CD4-positive, alpha-beta memory T cell (primary cell): ENCODE measurements at regions of chr17 and their contacts with region 1.

Region 1: GRCh38 chr17:47895856-47896671 is at the start of gene SP2:
- DNase-seq: peak; percentile 100
- H3K4me3 ChIP-seq: peak within 1 kb of the TSS; percentile 92 to 96
- H3K4me3 Mint-ChIP-seq: peak within 1 kb of the TSS; percentile 94 to 100 (median 99)
- H3K27ac ChIP-seq: peak within 1 kb of the TSS; percentile 97
- H3K27ac Mint-ChIP-seq: peak within 1 kb of the TSS; percentile 96 to 100 (median 100)
- H3K4me1 ChIP-seq: peaks cover 42% of the 10 kb centered on the region
- H3K4me1 Mint-ChIP-seq: peaks cover 27 to 58% (median 39%) of the 10 kb centered on the region in 4 donors
- H3K27me3 ChIP-seq: no peaks in the 10 kb centered on the region
- H3K27me3 Mint-ChIP-seq: no peaks in the 10 kb centered on the region
- total RNA-seq, gene SP2: 39.6 to 39.9 TPM

Region 2: DNA sequence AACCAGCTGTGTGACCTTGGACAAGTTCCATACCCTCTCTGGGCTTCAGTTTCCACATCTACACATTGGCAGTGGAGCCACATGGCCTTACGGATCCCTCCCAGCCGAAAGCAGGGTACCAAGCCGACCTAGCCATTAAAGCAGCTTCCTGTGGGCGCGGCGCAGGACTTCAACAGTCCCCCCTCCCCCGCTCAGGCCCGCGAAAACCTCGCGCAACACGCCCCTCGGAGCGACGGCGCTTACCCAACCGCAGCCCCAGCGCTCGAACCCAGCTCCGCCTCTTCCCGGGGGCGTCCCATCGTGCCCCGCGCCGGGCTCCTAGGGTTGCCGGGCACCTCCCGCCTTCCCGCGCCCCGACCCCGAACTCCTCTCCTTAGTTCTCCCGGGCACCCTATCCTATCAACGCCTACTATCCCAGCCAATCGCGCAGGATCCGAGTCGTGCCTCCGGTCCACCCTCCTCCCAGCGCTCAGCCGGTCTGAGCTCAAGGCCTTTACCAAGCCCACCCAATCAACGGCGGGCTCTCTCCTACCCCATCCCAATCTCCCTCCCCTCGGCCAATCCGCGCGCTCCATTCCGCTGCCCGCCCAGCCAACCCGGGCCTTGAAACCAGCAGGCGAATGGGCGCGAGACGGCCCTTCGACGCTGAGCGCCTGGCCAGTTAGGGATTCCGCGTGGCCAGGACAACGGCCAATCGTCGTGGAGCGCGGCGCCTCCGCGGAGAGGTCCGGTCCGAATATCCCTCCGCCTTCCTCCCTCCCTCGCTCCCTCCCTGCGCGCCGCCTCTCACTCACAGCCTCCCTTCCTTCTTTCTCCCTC is 246.7 kb before region 1 on chr17 and contains the start of gene KPNB1:
- CTCF ChIA-PET with region 1: no interaction called
- POLR2A ChIA-PET with region 1: interaction called, 23 read pairs
- intact Hi-C with region 1: loop called (anchors 1 kb)
- DNase-seq: peak; percentile 98 to 99 (median 98)
- H3K4me3 ChIP-seq: peak within 1 kb of the TSS; percentile 73 to 79
- H3K4me3 Mint-ChIP-seq: peak within 1 kb of the TSS; percentile 97 to 100 (median 100)
- H3K27ac ChIP-seq: peak within 1 kb of the TSS; percentile 82
- H3K27ac Mint-ChIP-seq: peak within 1 kb of the TSS; percentile 91 to 100 (median 99)
- H3K4me1 ChIP-seq: peaks cover 53% of the 10 kb centered on the region
- H3K4me1 Mint-ChIP-seq: peaks cover 37 to 68% (median 41%) of the 10 kb centered on the region in 4 donors
- H3K27me3 ChIP-seq: no peaks in the 10 kb centered on the region
- H3K27me3 Mint-ChIP-seq: no peaks in the 10 kb centered on the region
- total RNA-seq, gene KPNB1: 258 to 268 TPM

Region 3: DNA sequence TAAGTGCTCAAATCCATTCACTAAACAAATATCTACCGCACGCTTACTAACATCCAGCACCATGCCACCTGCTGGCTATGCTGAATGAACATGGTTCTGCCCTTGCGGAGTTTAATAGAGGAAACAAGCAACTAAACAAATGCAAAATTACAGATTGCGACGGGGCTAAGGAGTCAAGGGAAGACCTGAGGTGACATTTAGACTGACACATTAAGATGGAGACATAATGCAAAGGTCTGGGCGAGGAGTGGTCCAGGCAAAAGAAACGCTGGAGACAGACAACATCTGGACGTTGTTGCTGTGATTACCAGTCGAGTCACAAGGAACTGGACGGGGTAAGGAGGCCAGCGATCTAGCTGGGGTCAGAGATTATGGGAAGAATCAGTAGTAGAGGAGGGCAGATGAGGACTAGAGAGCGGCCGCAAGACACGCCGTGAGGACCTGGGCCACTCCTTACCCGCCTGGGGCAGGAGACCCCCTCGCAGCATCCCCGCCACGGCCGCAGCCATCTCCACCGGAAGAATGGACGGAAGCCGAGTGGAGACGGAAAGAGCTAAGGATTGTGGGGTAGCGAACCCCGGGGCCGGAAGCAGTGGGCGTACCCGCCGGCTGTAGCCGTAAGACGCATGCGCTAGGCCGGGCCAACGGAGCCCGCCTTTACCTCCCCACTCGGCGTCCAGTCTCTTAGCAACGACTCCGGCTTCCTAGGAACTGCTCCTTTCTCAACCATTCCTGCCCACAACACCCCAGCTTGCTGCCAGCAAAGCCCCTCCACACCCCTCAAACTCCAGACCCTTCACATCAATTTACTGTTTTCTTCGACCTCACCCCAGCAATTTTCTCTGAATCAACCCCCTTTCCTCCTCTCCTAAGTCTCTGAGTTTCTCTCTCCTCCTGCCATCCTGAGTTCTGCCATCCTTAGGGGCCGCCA is 64.8 kb before region 1 on chr17 and contains the starts of genes LRRC46 and MRPL10:
- CTCF ChIA-PET with region 1: interaction called, 562 read pairs
- POLR2A ChIA-PET with region 1: interaction called, 271 read pairs
- intact Hi-C with region 1: loop called (anchors 1 kb)
- DNase-seq: peak; percentile 90 to 91 (median 91)
- H3K4me3 ChIP-seq: peak within 1 kb of the TSS; percentile 87 to 100
- H3K4me3 Mint-ChIP-seq: peak within 1 kb of the TSS; percentile 86 to 98 (median 95)
- H3K27ac ChIP-seq: peak within 1 kb of the TSS; percentile 82
- H3K27ac Mint-ChIP-seq: peak within 1 kb of the TSS; percentile 86 to 100 (median 98)
- H3K4me1 ChIP-seq: peaks cover 56% of the 10 kb centered on the region
- H3K4me1 Mint-ChIP-seq: peaks cover 37 to 73% (median 49%) of the 10 kb centered on the region in 4 donors
- H3K27me3 ChIP-seq: no peaks in the 10 kb centered on the region
- H3K27me3 Mint-ChIP-seq: no peaks in the 10 kb centered on the region
- total RNA-seq, gene LRRC46: 0.23 to 0.69 TPM
- total RNA-seq, gene MRPL10: 39.6 to 41.4 TPM

Region 4: GRCh38 chr17:47882247-47882646 is 13.8 kb before region 1 on chr17:
- CTCF ChIA-PET with region 1: interaction called, 3 read pairs
- POLR2A ChIA-PET with region 1: interaction called, 34 read pairs
- intact Hi-C with region 1: no loop called
- DNase-seq: no peak
- H3K4me3 ChIP-seq: no peak overlapping the region
- H3K4me3 Mint-ChIP-seq: no peak overlapping the region
- H3K27ac ChIP-seq: no peak overlapping the region
- H3K27ac Mint-ChIP-seq: no peak overlapping the region
- H3K4me1 ChIP-seq: peaks cover 41% of the 10 kb centered on the region
- H3K4me1 Mint-ChIP-seq: peaks cover 23 to 36% (median 30%) of the 10 kb centered on the region in 4 donors
- H3K27me3 ChIP-seq: no peaks in the 10 kb centered on the region
- H3K27me3 Mint-ChIP-seq: peaks cover 3 to 11% of the 10 kb centered on the region in 2 donors

Region 5: DNA sequence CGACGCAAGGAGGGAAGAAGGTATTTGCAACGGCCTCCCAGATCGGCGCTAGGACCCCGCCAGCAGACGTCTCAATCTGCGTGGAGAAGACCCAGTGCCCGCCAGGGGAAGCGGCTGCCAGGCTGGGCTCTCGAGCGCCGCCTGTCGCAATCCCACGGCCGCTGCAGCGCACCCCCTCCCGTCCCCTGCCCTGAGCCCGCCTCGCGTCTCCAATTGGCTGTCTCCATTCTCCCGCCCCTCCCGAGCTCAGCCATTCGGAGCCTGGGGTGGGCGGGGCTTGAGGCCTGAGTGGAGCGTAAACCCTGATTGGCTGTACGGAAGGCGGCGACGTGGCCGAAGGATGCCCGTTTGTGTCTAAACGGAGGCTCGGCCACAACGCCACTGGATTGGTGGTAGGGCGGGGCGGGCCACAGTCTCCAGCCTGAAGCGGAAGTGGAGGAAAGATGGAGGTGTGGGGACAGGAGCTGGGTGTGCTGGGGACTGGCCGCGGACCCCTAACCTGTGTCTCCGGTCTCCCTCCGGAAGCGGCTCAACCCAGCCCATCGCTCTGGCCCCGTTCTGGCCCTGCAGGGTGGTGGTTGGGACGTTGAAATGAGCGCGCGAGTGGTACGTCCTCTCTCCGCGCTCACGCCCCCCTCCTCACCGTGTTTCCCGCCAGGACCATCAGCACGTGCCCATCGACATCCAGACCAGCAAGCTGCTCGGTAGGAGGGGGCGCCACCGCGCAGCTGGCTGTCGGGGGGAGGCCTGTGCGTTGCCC is 74.8 kb after region 1 on chr17 and contains the start of gene CDK5RAP3:
- CTCF ChIA-PET with region 1: interaction called, 6 read pairs
- POLR2A ChIA-PET with region 1: interaction called, 45 read pairs
- intact Hi-C with region 1: loop called (anchors 1 kb)
- DNase-seq: peak; percentile 96 to 98 (median 97)
- H3K4me3 ChIP-seq: peak within 1 kb of the TSS; percentile 89 to 95
- H3K4me3 Mint-ChIP-seq: peak within 1 kb of the TSS; percentile 97 to 100 (median 98)
- H3K27ac ChIP-seq: peak within 1 kb of the TSS; percentile 62
- H3K27ac Mint-ChIP-seq: peak within 1 kb of the TSS; percentile 83 to 97 (median 96)
- H3K4me1 ChIP-seq: peaks cover 28% of the 10 kb centered on the region
- H3K4me1 Mint-ChIP-seq: peaks cover 17 to 42% (median 25%) of the 10 kb centered on the region in 4 donors
- H3K27me3 ChIP-seq: no peaks in the 10 kb centered on the region
- H3K27me3 Mint-ChIP-seq: peaks cover 0 to 1% of the 10 kb centered on the region in 2 donors
- total RNA-seq, gene CDK5RAP3: 340 to 343 TPM

Region 6: DNA sequence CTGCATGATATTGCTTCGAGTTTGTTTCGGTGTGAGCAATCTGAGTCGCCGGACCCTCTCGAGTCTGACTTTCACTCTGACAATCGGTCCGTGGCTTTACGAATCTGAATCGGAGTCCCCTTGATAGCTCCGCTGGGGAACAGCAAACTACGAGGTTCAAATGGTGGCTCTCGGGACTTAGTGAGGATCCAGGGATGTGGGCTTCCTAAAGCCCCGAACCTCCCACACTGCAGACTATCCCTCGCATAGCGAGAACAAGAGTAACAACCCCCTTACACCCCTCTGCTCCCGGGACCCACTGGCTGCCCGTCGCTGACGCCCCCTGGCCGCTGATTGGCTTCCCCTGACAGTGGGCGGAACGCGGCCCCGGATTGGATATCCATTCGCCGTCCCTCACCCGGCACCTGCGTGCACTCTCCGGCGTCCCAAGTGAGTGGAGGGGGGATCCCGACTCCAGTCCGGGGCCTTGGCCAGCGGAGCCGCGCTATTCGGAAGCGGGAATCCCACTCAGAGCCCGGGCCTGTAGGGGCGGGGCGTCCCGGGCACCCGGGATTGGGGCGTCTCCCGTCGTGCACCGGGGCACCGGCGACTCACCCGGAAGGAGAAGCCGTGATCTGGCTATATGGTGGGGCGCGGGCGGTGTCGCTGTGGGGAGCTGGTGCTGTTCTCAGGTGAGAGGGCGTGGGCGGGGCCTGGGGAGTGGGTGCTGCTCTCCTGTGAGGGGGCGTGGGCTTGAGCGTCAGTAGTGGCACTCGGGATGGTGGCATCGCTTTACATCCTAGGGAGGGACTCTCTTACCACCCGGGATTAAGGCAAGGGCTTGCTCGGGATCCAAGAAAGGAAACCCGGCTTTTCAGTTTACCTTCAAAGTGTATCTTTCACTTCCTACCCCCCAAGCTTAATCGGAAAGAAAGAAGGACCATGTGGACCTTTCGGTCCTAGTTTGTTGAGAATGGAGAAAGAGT is 211.4 kb after region 1 on chr17 and contains the start of gene SNX11:
- CTCF ChIA-PET with region 1: no interaction called
- POLR2A ChIA-PET with region 1: interaction called, 3 read pairs
- intact Hi-C with region 1: loop called (anchors 1 kb)
- DNase-seq: peak; percentile 93 to 98 (median 95)
- H3K4me3 ChIP-seq: peak within 1 kb of the TSS; percentile 83 to 98
- H3K4me3 Mint-ChIP-seq: peak within 1 kb of the TSS; percentile 92 to 99 (median 97)
- H3K27ac ChIP-seq: peak within 1 kb of the TSS; percentile 85
- H3K27ac Mint-ChIP-seq: peak within 1 kb of the TSS; percentile 82 to 96 (median 94)
- H3K4me1 ChIP-seq: peaks cover 47% of the 10 kb centered on the region
- H3K4me1 Mint-ChIP-seq: peaks cover 36 to 68% (median 51%) of the 10 kb centered on the region in 4 donors
- H3K27me3 ChIP-seq: no peaks in the 10 kb centered on the region
- H3K27me3 Mint-ChIP-seq: no peaks in the 10 kb centered on the region
- total RNA-seq, gene SNX11: 20.8 to 22.0 TPM